ENCODE measurements at regions of chr9 and their contacts with region 1.

Region 1: DNA sequence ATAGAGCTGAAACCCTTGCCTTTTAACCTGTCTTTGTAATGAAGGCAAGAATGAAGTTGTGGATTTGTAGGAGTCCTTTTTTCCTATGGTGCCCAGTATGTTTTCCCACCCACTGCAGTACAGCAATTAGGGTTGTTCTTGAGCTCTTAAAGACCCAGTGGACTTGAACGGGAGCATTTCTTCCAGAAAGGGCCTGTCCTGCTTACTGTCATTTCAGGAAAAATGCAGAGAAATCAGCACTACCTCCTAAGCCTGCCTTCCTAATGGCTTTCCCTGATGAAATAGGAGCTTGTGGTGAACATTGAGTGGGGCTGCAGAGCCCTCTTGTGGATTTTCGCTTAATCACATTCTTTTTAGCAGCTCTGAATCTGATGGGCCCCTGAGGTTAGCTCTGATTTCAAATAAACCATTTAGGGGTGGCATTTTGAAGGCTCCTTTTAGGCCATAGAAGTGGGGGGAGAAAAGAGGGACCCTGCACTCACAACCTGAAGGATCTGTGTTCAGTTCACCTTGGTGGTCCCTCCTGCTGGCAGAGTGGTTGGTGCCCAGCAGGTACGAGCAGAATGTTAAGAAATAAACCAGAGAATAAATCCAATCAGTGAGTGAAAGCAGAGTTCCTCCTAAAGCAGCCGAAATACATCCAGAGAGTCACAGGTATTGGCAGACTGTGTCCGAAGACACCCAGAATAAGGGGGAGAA is 188.0 kb upstream of the KLF9 start:
- DNase-seq: peak in 4 of 5 donors; percentile 8 to 58 (median 48)
- H3K4me3 ChIP-seq: no peak overlapping the region
- H3K4me3 Mint-ChIP-seq: no peak overlapping the region
- H3K27ac ChIP-seq: no peak overlapping the region
- H3K27ac Mint-ChIP-seq: no peak overlapping the region
- H3K4me1 ChIP-seq: peaks cover 4% of the 10 kb centered on the region
- H3K4me1 Mint-ChIP-seq: no peaks in the 10 kb centered on the region
- H3K27me3 ChIP-seq: no peaks in the 10 kb centered on the region
- H3K27me3 Mint-ChIP-seq: no peaks in the 10 kb centered on the region

Region 2: DNA sequence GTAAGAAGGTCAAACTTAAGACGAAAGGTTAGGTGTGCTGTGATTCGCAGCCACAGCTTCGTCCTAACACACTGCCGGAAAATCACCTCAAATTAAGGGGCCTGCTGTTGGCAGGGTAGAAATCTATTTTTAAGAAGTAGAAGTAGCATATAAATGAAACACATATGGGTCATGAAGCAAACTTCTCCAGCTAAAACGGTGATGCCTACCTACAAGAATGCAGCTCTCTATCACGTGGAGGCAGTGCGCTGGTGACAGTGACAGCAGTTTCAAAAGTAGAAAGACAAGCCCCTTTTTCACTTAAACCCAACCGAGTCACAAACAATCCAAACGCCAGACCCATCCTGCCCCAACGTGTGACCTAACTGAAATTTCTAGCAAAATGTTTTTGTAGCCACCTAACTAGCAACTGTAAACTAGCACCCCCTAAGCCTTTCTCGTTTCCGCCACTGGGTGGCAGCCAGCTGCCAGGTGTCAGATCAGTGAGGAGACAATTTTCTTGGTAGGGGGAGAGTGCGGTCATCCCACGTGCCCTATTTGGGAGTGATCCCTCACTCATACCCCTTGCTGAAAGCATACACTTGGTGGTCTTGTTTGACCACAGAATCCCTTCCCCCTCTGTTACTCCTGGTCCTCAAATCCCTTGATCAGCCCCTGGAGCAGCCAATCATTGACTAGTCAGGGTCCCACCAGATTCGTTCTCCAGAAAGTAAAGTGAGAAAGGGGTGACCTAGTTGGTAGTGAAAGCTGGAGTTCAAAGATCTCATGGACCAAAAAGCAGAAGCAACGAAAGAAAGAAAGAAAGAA is 630.6 kb before region 1 on chr9:
- CTCF ChIA-PET with region 1: interaction called, 10 read pairs
- POLR2A ChIA-PET with region 1: no interaction called
- DNase-seq: peak; percentile 2 to 47 (median 12)
- H3K4me3 ChIP-seq: no peak overlapping the region
- H3K4me3 Mint-ChIP-seq: no peak overlapping the region
- H3K27ac ChIP-seq: no peak overlapping the region
- H3K27ac Mint-ChIP-seq: peak overlapping the region in 1 of 8 donors; percentile 13
- H3K4me1 ChIP-seq: no peaks in the 10 kb centered on the region
- H3K4me1 Mint-ChIP-seq: no peaks in the 10 kb centered on the region
- H3K27me3 ChIP-seq: no peaks in the 10 kb centered on the region
- H3K27me3 Mint-ChIP-seq: peaks cover 6 to 17% of the 10 kb centered on the region in 2 donors

Region 3: DNA sequence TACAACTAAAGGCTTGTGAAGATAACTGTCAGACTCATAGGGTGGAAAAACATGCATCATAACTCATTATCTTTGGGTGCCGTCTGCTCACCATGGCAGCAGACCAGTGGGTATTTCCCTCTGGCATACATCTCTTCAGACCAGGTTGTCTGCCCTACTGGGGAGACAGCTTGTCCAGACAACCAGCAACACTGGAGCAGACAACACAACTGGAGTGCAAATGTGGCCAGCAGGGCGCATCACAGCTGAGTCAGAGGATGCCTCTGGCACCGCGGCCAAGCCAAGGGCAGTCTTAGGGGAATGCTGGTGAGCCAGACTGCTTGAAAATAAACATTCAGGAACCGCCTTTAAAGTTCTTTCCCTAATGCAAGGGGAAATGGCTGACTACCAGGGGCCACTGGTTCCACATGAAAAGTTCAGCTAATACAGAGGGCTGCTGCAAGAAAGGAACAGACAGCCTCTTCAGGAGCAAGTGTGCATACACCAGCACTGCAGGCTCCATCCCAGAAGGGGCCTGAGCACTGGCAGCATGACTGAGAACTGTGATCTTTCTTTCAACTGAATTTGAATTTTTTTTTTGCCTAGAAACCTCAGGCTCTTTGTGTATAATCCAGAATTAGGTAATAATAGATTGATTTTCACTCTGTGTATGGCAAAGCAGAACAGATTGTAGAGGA is 481.5 kb before region 1 on chr9:
- CTCF ChIA-PET with region 1: no interaction called
- POLR2A ChIA-PET with region 1: no interaction called
- DNase-seq: no peak
- H3K4me3 ChIP-seq: no peak overlapping the region
- H3K4me3 Mint-ChIP-seq: no peak overlapping the region
- H3K27ac ChIP-seq: no peak overlapping the region
- H3K27ac Mint-ChIP-seq: no peak overlapping the region
- H3K4me1 ChIP-seq: no peaks in the 10 kb centered on the region
- H3K4me1 Mint-ChIP-seq: no peaks in the 10 kb centered on the region
- H3K27me3 ChIP-seq: no peaks in the 10 kb centered on the region
- H3K27me3 Mint-ChIP-seq: peaks cover 8 to 11% of the 10 kb centered on the region in 2 donors

Region 4: DNA sequence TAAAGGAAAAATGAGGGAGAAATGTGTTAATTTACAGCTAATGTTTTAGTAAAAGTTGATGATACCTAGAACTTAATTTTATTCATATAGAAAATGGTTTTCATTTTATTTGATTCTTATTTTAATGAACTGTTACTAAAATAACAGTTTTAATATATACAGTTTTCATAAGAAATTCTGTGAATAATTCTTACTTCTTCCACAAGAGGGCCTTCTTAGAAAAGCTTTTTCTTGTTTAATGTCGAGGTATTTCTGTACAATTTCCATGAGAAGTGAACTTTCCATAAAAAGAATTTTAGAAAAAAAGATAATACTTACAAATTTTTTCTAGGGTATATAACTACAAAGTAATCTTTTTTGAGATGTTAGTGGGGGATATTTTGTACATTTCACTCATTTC is 261.9 kb before region 1 on chr9:
- CTCF ChIA-PET with region 1: interaction called, 17 read pairs
- POLR2A ChIA-PET with region 1: interaction called, 3 read pairs
- DNase-seq: peak in 2 of 5 donors; percentile 8 to 14
- H3K4me3 ChIP-seq: no peak overlapping the region
- H3K4me3 Mint-ChIP-seq: no peak overlapping the region
- H3K27ac ChIP-seq: no peak overlapping the region
- H3K27ac Mint-ChIP-seq: no peak overlapping the region
- H3K4me1 ChIP-seq: no peaks in the 10 kb centered on the region
- H3K4me1 Mint-ChIP-seq: no peaks in the 10 kb centered on the region
- H3K27me3 ChIP-seq: no peaks in the 10 kb centered on the region
- H3K27me3 Mint-ChIP-seq: no peaks in the 10 kb centered on the region

Region 5: DNA sequence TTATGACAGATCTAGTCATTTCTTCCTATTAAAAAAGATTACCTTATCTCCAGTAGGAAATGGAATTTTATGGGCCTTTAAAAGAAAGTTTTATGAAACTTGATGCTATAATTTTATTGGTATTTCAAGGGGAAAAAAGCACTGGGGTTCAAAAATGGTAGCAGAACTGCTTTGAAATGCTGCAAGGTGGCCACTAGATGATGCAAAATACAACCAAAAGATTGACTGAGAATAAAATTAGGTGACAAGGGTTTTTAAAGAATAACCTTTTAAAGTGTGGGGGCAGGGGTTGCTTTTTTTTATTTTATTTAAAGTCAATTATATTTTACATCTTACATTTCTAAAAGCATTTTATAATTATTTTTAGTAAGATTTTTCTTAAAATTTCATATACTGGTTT is 249.7 kb before region 1 on chr9:
- CTCF ChIA-PET with region 1: interaction called, 11 read pairs
- POLR2A ChIA-PET with region 1: no interaction called
- DNase-seq: peak in 2 of 5 donors; percentile 20 to 28
- H3K4me3 ChIP-seq: no peak overlapping the region
- H3K4me3 Mint-ChIP-seq: no peak overlapping the region
- H3K27ac ChIP-seq: no peak overlapping the region
- H3K27ac Mint-ChIP-seq: peak overlapping the region in 1 of 8 donors; percentile 4
- H3K4me1 ChIP-seq: no peaks in the 10 kb centered on the region
- H3K4me1 Mint-ChIP-seq: peaks cover 0 to 2% (median 0%) of the 10 kb centered on the region in 3 donors
- H3K27me3 ChIP-seq: no peaks in the 10 kb centered on the region
- H3K27me3 Mint-ChIP-seq: no peaks in the 10 kb centered on the region

Region 6: DNA sequence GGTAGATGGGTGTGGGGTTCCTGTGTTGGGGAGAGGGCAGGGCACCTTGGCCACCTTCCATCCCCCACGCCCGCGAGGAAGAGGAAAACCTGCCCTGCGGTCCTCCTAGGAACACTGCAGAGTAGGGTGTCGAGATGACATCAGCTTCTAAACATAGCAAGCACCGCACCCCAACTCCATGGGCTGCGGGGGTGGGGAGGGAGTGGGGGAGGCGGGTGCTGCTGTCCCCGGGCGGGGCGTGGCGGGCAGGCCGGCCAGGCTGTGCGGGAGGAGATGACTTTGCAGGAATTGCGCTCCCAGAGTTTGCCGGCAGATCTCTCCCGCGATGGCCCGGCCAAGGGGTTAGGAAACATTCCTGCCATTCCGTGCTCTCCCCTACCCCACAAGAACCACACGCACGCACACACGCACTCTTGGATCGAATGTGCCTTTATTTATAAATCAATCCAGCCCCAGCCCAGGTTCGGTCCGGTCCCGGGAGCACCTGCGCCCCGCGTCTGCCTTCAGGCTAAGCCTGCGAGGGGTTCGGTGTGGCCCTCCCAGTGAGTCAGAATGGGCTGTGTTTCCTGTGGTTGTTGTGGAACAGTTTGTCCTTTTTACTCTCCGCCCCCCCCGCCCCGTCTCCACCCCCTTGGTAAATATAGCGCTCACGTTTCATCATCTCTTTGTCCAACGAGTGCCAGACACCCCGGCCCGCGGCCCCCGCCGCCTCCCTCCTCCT is 182.8 kb before region 1 on chr9:
- CTCF ChIA-PET with region 1: interaction called, 13 read pairs
- POLR2A ChIA-PET with region 1: interaction called, 4 read pairs
- DNase-seq: peak; percentile 83 to 93 (median 85)
- H3K4me3 ChIP-seq: peak overlapping the region; percentile 90
- H3K4me3 Mint-ChIP-seq: peak overlapping the region; percentile 93 to 98 (median 96)
- H3K27ac ChIP-seq: peak overlapping the region; percentile 96
- H3K27ac Mint-ChIP-seq: peak overlapping the region; percentile 97 to 100 (median 98)
- H3K4me1 ChIP-seq: peaks cover 44% of the 10 kb centered on the region
- H3K4me1 Mint-ChIP-seq: peaks cover 45 to 58% (median 55%) of the 10 kb centered on the region in 3 donors
- H3K27me3 ChIP-seq: no peaks in the 10 kb centered on the region
- H3K27me3 Mint-ChIP-seq: peaks cover 0 to 2% of the 10 kb centered on the region in 2 donors

Region 7: GRCh38 chr9:70485273-70485858 is 117.1 kb before region 1 on chr9:
- CTCF ChIA-PET with region 1: interaction called, 11 read pairs
- POLR2A ChIA-PET with region 1: no interaction called
- DNase-seq: no peak
- H3K4me3 ChIP-seq: no peak overlapping the region
- H3K4me3 Mint-ChIP-seq: no peak overlapping the region
- H3K27ac ChIP-seq: peak overlapping the region; percentile 57
- H3K27ac Mint-ChIP-seq: peak overlapping the region in 1 of 8 donors; percentile 48
- H3K4me1 ChIP-seq: no peaks in the 10 kb centered on the region
- H3K4me1 Mint-ChIP-seq: no peaks in the 10 kb centered on the region
- H3K27me3 ChIP-seq: no peaks in the 10 kb centered on the region
- H3K27me3 Mint-ChIP-seq: peaks cover 0 to 11% of the 10 kb centered on the region in 2 donors

Region 8: DNA sequence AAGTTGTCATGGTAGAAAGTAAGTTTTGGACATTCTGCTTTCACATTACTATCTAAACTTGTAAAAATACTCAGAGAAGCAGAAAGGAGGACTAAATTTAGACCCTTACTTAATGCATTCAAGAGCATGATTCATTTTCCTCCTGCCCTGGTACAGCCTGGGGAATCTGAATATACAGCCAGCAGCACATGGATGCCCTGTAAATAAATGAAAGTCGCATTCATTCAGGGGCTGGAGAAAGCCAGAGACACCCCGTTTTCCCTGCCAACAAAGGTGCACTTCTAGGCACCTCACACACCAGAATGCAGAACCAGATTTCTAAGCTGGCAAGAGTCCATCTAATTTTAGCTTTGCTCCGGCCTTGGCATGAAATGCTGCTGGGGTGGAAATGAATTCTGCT is 15.3 kb before region 1 on chr9:
- CTCF ChIA-PET with region 1: interaction called, 16 read pairs
- POLR2A ChIA-PET with region 1: no interaction called
- DNase-seq: no peak
- H3K4me3 ChIP-seq: no peak overlapping the region
- H3K4me3 Mint-ChIP-seq: no peak overlapping the region
- H3K27ac ChIP-seq: no peak overlapping the region
- H3K27ac Mint-ChIP-seq: no peak overlapping the region
- H3K4me1 ChIP-seq: no peaks in the 10 kb centered on the region
- H3K4me1 Mint-ChIP-seq: no peaks in the 10 kb centered on the region
- H3K27me3 ChIP-seq: no peaks in the 10 kb centered on the region
- H3K27me3 Mint-ChIP-seq: peaks cover 0 to 8% of the 10 kb centered on the region in 2 donors

Region 9: DNA sequence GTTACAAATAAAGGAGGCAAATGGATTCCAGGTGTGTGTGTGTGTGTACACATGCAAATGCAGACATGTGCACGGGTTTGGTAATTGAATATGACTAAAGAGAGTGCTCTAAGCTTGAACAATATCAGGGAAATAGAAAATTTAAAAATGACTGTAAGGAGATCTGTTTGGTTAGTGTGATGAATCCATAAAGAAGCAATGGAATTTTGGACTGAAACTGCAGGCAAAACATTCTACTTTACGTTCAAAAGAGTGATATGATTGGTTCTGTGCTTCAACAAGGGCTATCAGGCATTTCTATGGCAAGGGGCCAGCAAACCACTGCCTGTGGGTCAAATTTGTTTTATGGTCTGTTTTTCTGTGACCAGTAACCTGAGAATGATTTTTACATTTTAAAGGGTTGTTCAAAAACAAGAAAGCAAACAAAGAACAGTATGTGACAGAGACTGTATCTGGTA is 144.8 kb after region 1 on chr9:
- CTCF ChIA-PET with region 1: no interaction called
- POLR2A ChIA-PET with region 1: no interaction called
- DNase-seq: no peak
- H3K4me3 ChIP-seq: no peak overlapping the region
- H3K4me3 Mint-ChIP-seq: no peak overlapping the region
- H3K27ac ChIP-seq: no peak overlapping the region
- H3K27ac Mint-ChIP-seq: no peak overlapping the region
- H3K4me1 ChIP-seq: no peaks in the 10 kb centered on the region
- H3K4me1 Mint-ChIP-seq: no peaks in the 10 kb centered on the region
- H3K27me3 ChIP-seq: no peaks in the 10 kb centered on the region
- H3K27me3 Mint-ChIP-seq: peaks cover 3 to 15% of the 10 kb centered on the region in 2 donors